AG04450 (cell line): ENCODE measurements at regions of chr14 and their contacts with region 1.

Region 1: DNA sequence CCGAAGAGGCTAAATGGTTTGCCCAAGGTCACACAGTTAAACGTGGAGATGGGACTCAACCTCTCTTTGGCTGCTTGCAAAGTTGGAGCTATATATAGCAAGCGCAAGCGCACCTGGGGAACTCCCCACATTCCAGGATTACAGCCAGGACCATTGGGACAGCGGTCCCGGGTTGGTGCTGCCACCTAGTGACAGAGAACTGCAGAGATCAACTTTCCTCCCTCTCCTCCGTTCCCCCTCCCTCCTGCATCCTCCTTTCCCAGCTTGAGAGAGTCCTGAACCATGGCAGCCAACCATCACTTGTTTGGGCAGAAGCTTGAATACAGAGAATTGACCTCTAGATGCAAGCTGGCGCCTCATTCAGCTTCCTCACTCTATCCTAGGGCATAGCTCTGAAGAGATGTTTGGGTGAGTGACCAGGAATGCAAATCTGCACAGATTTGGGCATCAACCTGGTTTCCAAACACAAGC is 17.4 kb upstream of the FLVCR2 start:
- DNase-seq: no peak
- H3K4me3 ChIP-seq: no peak overlapping the region
- H3K27ac ChIP-seq: no peak overlapping the region
- H3K27me3 ChIP-seq: peaks cover 13% of the 10 kb centered on the region
- CTCF ChIP-seq: peak; percentile 86

Region 2: GRCh38 chr14:75307700-75308379 is 253.2 kb before region 1 on chr14:
- CTCF ChIA-PET with region 1: interaction called, 27 read pairs
- POLR2A ChIA-PET with region 1: no interaction called
- DNase-seq: no peak
- H3K4me3 ChIP-seq: no peak overlapping the region
- H3K27ac ChIP-seq: no peak overlapping the region
- H3K27me3 ChIP-seq: no peaks in the 10 kb centered on the region
- CTCF ChIP-seq: peak; percentile 96

Region 3: DNA sequence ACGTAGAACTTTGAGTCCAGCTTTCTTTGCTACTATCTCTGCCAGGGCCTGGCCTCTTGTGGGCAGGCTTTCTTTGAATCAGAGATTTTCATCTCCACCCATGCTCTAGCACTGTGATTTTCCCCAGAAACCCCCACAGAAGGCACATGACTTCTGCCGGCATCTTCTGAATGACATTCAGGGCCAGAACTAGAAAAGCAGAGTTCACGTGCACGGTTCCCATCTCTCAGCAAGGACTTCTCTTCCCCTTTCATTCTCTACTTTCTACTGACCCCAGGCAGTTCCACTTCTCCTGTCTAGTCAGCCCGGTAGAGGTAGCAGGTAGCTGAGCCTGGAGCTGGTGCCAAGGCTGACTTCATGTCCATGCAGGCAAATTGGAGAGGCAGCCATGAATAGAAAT is 11.8 kb before region 1 on chr14:
- CTCF ChIA-PET with region 1: interaction called, 14 read pairs
- POLR2A ChIA-PET with region 1: no interaction called
- DNase-seq: no peak
- H3K4me3 ChIP-seq: no peak overlapping the region
- H3K27ac ChIP-seq: no peak overlapping the region
- H3K27me3 ChIP-seq: peaks cover 8% of the 10 kb centered on the region
- CTCF ChIP-seq: no peak

Region 4: GRCh38 chr14:75654127-75654732 is 93.2 kb after region 1 on chr14:
- CTCF ChIA-PET with region 1: interaction called, 11 read pairs
- POLR2A ChIA-PET with region 1: no interaction called
- DNase-seq: no peak
- H3K4me3 ChIP-seq: no peak overlapping the region
- H3K27ac ChIP-seq: no peak overlapping the region
- H3K27me3 ChIP-seq: no peaks in the 10 kb centered on the region
- CTCF ChIP-seq: peak; percentile 99